Astrocyte of the cerebellum (primary cell): ENCODE measurements at regions of chr10 and their contacts with region 1.

Region 1: DNA sequence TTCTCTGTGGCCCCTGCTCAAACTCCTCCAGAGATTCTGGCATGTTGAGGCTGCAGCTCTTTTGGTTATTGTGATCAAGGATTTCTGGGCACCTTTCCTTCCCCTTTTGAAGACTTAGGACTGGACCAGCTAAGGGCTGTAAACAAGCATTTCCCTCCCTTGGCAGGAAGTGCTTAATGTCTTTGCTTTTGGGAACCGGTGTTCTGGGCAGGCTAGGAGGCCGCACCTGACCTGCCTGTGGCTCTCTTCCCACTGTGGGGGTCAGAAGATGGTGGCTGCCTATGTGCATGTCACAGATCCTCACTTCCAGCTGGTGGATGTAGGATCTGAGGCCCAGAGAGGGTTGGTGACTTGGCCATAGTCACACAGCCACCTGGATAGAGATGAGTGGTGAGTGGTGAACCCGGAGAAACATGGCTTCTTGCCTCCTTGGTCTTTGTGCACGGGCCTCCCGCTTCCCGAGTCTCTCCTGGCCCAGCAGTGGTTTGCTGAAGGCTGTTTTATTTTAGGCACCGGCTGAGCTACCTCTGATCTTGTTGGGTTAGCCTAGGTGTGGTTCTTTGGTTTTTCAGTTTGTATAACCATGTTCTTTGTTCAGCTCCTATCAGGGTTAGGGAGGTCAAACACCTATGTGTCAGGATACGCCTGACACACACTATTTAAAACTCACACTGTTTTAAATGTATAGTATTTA is 82.0 kb downstream of the GRK5 start:
- DNase-seq: no peak
- H3K4me3 ChIP-seq: no peak overlapping the region
- CTCF ChIP-seq: no peak

Region 2: GRCh38 chr10:119320981-119321380 is 31.6 kb after region 1 on chr10:
- in situ Hi-C with region 1: loop called (anchors 5 kb)
- DNase-seq: no peak
- H3K4me3 ChIP-seq: no peak overlapping the region
- CTCF ChIP-seq: no peak